Lower lobe of right lung (tissue), 2 donors: ENCODE measurements at regions of chr3 and their contacts with region 1.

Region 1: GRCh38 chr3:107271787-107272387 is 105.4 kb upstream of the CCDC54 start:
- DNase-seq: no peak
- ATAC-seq: peak; percentile 51 to 64
- H3K4me3 ChIP-seq: no peak overlapping the region
- H3K27ac ChIP-seq: no peak overlapping the region
- H3K4me1 ChIP-seq: no peaks in the 10 kb centered on the region
- H3K27me3 ChIP-seq: no peaks in the 10 kb centered on the region
- CTCF ChIP-seq: peak; percentile 70

Region 2: GRCh38 chr3:107045791-107046190 is 226.1 kb before region 1 on chr3:
- intact Hi-C with region 1: no loop called
- DNase-seq: no peak
- ATAC-seq: no peak
- H3K4me3 ChIP-seq: no peak overlapping the region
- H3K27ac ChIP-seq: no peak overlapping the region
- H3K4me1 ChIP-seq: no peaks in the 10 kb centered on the region
- H3K27me3 ChIP-seq: no peaks in the 10 kb centered on the region
- CTCF ChIP-seq: no peak

Region 3: GRCh38 chr3:107064445-107065060 is 207.3 kb before region 1 on chr3:
- intact Hi-C with region 1: no loop called
- DNase-seq: no peak
- ATAC-seq: peak; percentile 80 to 83
- H3K4me3 ChIP-seq: no peak overlapping the region
- H3K27ac ChIP-seq: no peak overlapping the region
- H3K4me1 ChIP-seq: peaks cover 19% of the 10 kb centered on the region
- H3K27me3 ChIP-seq: no peaks in the 10 kb centered on the region
- CTCF ChIP-seq: peak; percentile 80

Region 4: DNA sequence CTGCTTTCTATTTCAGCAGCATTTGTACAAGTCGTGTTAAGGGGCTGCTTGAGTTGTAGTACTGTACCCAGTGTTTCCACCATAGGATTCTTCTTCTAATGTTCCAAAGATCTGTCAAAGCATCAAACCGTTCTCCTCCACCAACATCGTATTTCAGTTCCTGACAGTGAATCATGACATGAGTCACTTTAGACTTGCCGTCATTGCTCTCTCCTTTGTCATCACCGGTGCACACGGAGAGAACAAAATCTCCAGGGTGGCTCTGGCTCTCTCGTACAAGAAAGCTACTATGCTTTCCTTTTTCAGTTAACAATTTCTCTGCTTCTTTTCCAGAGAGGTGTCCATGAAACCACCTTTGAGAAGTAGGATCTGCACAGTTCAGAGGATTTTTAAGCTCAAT is 165.6 kb before region 1 on chr3:
- intact Hi-C with region 1: no loop called
- DNase-seq: no peak
- ATAC-seq: no peak
- H3K4me3 ChIP-seq: no peak overlapping the region
- H3K27ac ChIP-seq: no peak overlapping the region
- H3K4me1 ChIP-seq: no peaks in the 10 kb centered on the region
- H3K27me3 ChIP-seq: no peaks in the 10 kb centered on the region
- CTCF ChIP-seq: no peak

Region 5: DNA sequence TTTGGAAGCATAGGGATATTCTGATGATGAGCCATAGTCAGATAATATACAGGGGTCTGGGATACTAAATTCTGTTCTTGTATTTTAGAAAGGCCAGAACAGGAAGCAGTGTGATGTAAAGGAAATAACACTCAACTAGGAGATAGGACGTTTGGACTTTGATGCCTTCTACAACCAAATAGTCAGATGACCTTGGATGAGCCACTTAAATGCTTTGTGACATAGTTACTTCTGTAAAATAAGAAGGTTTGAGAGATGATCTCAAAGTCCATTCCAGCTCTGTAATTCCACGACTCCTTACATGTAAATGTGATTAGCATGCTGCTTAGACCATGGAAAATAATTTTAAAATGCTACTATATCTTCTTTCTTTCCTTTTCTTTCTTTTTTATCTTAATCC is 75.9 kb after region 1 on chr3:
- intact Hi-C with region 1: no loop called
- DNase-seq: no peak
- ATAC-seq: no peak
- H3K4me3 ChIP-seq: no peak overlapping the region
- H3K27ac ChIP-seq: no peak overlapping the region
- H3K4me1 ChIP-seq: no peaks in the 10 kb centered on the region
- H3K27me3 ChIP-seq: no peaks in the 10 kb centered on the region
- CTCF ChIP-seq: no peak

Region 6: DNA sequence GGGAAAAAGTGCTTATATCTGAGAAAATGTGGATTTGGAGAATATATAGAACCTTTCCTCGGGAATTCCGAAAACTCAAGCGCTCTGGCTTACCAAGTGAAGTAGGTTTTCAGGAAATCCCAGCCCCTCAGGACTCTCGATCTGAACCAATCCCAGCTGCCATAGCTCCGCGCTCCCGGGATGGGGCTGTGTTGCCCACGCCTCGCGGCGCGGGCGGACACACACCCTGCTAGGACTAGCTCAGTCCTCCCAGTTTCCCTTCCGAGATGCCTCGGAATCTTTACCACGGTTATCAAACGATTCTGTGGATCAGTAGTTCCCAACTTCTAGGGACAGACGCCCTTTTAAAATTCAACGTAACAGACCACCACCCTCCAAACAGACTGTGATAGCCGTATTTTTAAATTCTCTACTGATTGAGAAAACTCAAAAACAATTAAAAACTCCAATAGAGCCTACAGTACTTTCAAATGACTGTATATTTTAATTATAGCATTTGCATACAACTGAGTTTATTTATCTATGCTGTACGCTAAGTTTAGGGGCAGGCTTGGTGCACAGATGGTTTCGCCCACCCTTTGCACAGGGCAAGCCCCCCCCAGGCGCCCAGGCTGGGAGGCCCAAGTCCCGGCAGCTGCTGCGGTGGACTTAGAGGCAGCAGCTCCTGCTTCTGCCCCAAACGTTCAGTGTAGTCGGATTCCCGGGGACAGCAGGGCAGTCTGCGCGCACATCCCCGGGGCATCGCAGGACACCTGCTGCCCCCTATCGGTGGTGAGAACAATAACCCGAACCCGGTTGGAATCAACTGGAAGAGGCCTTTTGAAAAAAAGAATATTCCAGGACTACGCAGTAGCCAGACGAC is 157.7 kb after region 1 on chr3:
- intact Hi-C with region 1: loop called (anchors 10 kb)
- DNase-seq: peak; percentile 77
- ATAC-seq: peak; percentile 85 to 90
- H3K4me3 ChIP-seq: peak overlapping the region; percentile 72
- H3K27ac ChIP-seq: peak overlapping the region; percentile 46
- H3K4me1 ChIP-seq: peaks cover 6% of the 10 kb centered on the region
- H3K27me3 ChIP-seq: no peaks in the 10 kb centered on the region
- CTCF ChIP-seq: peak; percentile 80